ENCODE measurements at regions of chr16 and their contacts with region 1.

Region 1: GRCh38 chr16:56269811-56270684 is 78.8 kb downstream of the GNAO1 start:
- DNase-seq: no peak
- ATAC-seq: no peak
- H3K4me3 ChIP-seq: no peak overlapping the region
- H3K4me3 Mint-ChIP-seq: no peak overlapping the region
- H3K27ac ChIP-seq: no peak overlapping the region
- H3K27ac Mint-ChIP-seq: no peak overlapping the region
- H3K4me1 ChIP-seq: no peaks in the 10 kb centered on the region
- H3K4me1 Mint-ChIP-seq: peaks cover 0 to 2% (median 0%) of the 10 kb centered on the region in 7 donors
- H3K27me3 ChIP-seq: no peaks in the 10 kb centered on the region
- H3K27me3 Mint-ChIP-seq: peaks cover 12 to 47% (median 22%) of the 10 kb centered on the region in 5 donors

Region 2: DNA sequence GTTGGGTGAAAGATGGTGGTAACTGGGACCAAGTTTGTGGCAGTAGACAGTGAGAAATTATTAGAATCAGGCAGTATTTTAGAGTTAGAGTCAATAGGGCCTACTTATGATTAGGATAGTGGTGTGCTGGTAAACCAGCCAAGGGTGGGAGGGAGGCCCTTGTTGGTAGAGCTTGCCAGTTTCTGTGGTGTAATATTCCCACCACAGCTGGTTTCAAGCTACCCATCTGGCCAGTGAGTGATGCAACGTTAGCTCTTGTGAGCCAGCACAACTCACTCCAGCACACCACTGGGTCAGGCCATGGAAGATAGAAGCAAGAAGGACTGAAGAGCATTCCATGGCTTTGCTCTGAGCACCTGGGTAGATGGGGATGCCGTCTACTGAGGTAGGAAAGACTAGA is 43.9 kb before region 1 on chr16:
- CTCF ChIA-PET with region 1: no interaction called
- POLR2A ChIA-PET with region 1: no interaction called
- intact Hi-C with region 1: loop called in 1 of 2 experiments (anchors 10 kb)
- DNase-seq: no peak
- ATAC-seq: no peak
- H3K4me3 ChIP-seq: no peak overlapping the region
- H3K4me3 Mint-ChIP-seq: peak overlapping the region in 2 of 10 donors; percentile 5 to 56
- H3K27ac ChIP-seq: no peak overlapping the region
- H3K27ac Mint-ChIP-seq: peak overlapping the region in 1 of 9 donors; percentile 13
- H3K4me1 ChIP-seq: peaks cover 5 to 34% of the 10 kb centered on the region in 2 donors
- H3K4me1 Mint-ChIP-seq: peaks cover 24 to 36% (median 28%) of the 10 kb centered on the region in 7 donors
- H3K27me3 ChIP-seq: no peaks in the 10 kb centered on the region
- H3K27me3 Mint-ChIP-seq: peaks cover 0 to 44% (median 0%) of the 10 kb centered on the region in 5 donors